ENCODE measurements at regions of chr3 and their contacts with region 1.

Region 1: GRCh38 chr3:141441381-141442364 is 45.2 kb upstream of the RASA2 start:
- DNase-seq: peak; percentile 57 to 82 (median 67)
- H3K4me3 ChIP-seq: no peak overlapping the region
- H3K4me3 Mint-ChIP-seq: peak overlapping the region in 6 of 7 donors; percentile 64 to 78 (median 72)
- H3K27ac ChIP-seq: no peak overlapping the region
- H3K27ac Mint-ChIP-seq: peak overlapping the region; percentile 35 to 89 (median 82)
- H3K4me1 ChIP-seq: peaks cover 26% of the 10 kb centered on the region
- H3K4me1 Mint-ChIP-seq: peaks cover 41 to 60% (median 55%) of the 10 kb centered on the region in 3 donors
- H3K27me3 ChIP-seq: no peaks in the 10 kb centered on the region
- H3K27me3 Mint-ChIP-seq: no peaks in the 10 kb centered on the region

Region 2: DNA sequence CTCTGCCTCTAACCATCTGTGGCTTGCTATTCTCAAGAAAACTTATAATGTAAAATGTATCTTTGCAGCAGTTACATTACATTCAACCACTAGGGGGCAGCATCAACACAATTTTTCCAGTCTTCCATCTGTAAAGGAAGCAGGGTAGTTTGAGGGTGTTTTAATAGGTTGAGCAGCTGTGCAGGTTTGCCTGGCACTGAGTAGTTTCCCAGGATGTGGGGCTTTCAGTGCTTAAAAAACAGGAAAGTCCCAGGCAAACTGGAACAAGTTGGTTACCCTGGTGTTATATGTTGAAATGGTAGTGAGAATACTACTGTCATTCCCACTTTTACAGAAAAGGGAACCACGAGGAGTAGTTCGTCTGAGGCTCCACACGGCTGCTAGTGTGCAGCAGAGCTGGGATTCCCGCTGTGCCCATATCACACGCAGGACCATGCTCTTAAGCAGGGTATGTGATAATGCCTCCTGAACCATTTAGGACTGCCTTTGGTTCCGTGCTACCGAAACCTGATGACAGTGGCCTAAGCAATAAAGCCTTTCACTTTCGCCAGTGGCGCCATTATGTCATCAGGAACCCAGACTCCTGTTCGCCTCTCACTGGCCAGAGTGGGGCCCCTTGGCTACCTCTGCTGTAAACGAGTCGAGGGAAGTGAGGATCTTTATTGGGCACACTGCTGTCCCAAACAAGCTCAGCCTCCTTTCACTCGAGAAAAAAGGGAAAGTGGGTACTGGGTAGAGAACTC is 138.0 kb before region 1 on chr3:
- CTCF ChIA-PET with region 1: interaction called, 19 read pairs
- POLR2A ChIA-PET with region 1: no interaction called
- DNase-seq: peak; percentile 38 to 70 (median 66)
- H3K4me3 ChIP-seq: no peak overlapping the region
- H3K4me3 Mint-ChIP-seq: peak overlapping the region in 1 of 7 donors; percentile 10
- H3K27ac ChIP-seq: no peak overlapping the region
- H3K27ac Mint-ChIP-seq: no peak overlapping the region
- H3K4me1 ChIP-seq: peaks cover 41% of the 10 kb centered on the region
- H3K4me1 Mint-ChIP-seq: peaks cover 24 to 36% (median 34%) of the 10 kb centered on the region in 3 donors
- H3K27me3 ChIP-seq: no peaks in the 10 kb centered on the region
- H3K27me3 Mint-ChIP-seq: no peaks in the 10 kb centered on the region

Region 3: GRCh38 chr3:141360888-141361598 is 80.6 kb before region 1 on chr3:
- CTCF ChIA-PET with region 1: interaction called, 62 read pairs
- POLR2A ChIA-PET with region 1: interaction called, 4 read pairs
- DNase-seq: peak in 2 of 5 donors; percentile 24 to 39
- H3K4me3 ChIP-seq: no peak overlapping the region
- H3K4me3 Mint-ChIP-seq: peak overlapping the region in 5 of 7 donors; percentile 30 to 73 (median 49)
- H3K27ac ChIP-seq: no peak overlapping the region
- H3K27ac Mint-ChIP-seq: peak overlapping the region in 1 of 8 donors; percentile 61
- H3K4me1 ChIP-seq: no peaks in the 10 kb centered on the region
- H3K4me1 Mint-ChIP-seq: peaks cover 1 to 10% (median 8%) of the 10 kb centered on the region in 3 donors
- H3K27me3 ChIP-seq: no peaks in the 10 kb centered on the region
- H3K27me3 Mint-ChIP-seq: peaks cover 0 to 3% of the 10 kb centered on the region in 2 donors

Region 4: DNA sequence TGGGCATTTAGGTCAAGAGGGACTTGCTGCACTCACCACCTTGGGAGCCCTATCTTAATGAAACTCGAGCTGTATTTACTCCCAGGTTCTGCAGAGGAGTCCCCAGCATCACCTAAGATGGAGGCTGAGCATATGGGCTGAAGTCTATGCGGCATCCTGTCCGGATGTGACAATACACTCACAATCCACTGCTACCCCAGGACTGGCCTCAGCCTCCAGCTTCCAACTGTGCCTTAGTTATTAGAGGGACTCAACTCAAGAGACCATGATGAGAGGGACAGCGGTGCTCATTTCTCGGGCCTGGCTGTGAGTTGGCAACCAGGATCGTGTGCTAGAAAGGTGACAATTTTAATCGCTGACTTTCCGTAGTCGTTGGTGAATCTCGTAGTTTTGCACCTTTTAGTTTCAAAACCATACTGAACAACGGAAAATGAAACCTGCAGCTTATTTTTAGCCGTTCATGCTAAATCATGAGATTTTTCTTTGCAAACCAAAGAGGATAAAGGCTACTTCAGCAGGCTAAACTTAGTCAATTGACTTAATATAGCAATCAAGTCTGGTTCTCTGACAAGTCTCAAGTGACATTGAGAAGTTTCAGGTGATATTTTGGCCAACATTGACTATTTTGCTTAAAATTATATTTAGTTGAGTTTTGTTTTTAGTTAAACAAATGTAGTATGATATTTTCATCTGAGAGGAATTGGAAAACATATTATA is 62.3 kb before region 1 on chr3:
- CTCF ChIA-PET with region 1: interaction called, 11 read pairs
- POLR2A ChIA-PET with region 1: interaction called, 3 read pairs
- DNase-seq: peak in 2 of 5 donors; percentile 41 to 68
- H3K4me3 ChIP-seq: no peak overlapping the region
- H3K4me3 Mint-ChIP-seq: peak overlapping the region; percentile 52 to 89 (median 80)
- H3K27ac ChIP-seq: peak overlapping the region; percentile 54
- H3K27ac Mint-ChIP-seq: peak overlapping the region; percentile 86 to 98 (median 96)
- H3K4me1 ChIP-seq: peaks cover 16% of the 10 kb centered on the region
- H3K4me1 Mint-ChIP-seq: peaks cover 33 to 48% (median 47%) of the 10 kb centered on the region in 3 donors
- H3K27me3 ChIP-seq: no peaks in the 10 kb centered on the region
- H3K27me3 Mint-ChIP-seq: no peaks in the 10 kb centered on the region

Region 5: DNA sequence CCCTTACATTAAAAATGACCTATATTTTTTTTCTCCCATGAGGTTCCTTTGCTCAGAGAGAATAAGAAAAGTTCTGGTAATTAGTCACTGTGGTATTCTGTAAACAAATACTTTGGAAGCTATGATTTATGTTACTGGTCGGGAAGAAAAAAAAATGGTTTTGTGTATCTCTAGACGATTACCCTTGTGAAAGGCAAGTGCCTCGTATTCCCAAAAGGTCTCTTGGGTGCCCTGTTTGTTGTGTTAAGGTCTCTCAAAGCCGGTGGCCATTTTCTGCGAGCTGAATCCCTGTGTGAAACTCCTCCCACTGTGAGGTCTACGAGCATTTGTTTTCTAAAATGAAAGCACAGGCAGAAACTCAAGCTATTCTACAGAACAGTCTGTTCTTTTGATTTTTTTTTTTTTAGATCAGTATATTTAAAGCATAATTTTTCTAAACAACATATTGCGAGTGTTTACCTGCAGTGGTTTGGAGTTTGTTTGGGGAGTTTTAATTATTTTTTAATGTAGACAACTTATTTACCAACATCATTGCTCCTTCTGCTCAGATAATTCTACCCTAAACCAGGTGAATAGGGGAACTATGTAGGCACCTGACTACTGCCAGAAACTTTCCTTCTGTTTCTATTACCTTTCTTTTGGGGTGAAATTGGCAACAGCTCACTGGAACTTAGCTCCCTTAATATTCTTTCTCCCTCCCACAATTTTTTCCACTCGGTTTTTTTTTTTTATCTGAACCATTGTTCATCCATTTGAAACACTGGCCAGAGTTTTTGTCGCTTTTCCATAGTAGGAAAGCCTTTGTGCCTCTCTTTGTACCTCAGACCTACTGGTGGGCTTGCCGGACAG is 29.4 kb before region 1 on chr3:
- CTCF ChIA-PET with region 1: interaction called, 18 read pairs
- POLR2A ChIA-PET with region 1: no interaction called
- DNase-seq: peak; percentile 35 to 71 (median 57)
- H3K4me3 ChIP-seq: peak overlapping the region; percentile 38
- H3K4me3 Mint-ChIP-seq: peak overlapping the region; percentile 62 to 90 (median 87)
- H3K27ac ChIP-seq: peak overlapping the region; percentile 34
- H3K27ac Mint-ChIP-seq: peak overlapping the region; percentile 97 to 100 (median 99)
- H3K4me1 ChIP-seq: peaks cover 77% of the 10 kb centered on the region
- H3K4me1 Mint-ChIP-seq: peaks cover 82 to 99% (median 98%) of the 10 kb centered on the region in 3 donors
- H3K27me3 ChIP-seq: no peaks in the 10 kb centered on the region
- H3K27me3 Mint-ChIP-seq: no peaks in the 10 kb centered on the region

Region 6: GRCh38 chr3:141452036-141452435 is 10.4 kb after region 1 on chr3:
- CTCF ChIA-PET with region 1: interaction called, 38 read pairs
- POLR2A ChIA-PET with region 1: interaction called, 6 read pairs
- DNase-seq: peak in 3 of 5 donors; percentile 34 to 57 (median 56)
- H3K4me3 ChIP-seq: no peak overlapping the region
- H3K4me3 Mint-ChIP-seq: no peak overlapping the region
- H3K27ac ChIP-seq: peak overlapping the region; percentile 13
- H3K27ac Mint-ChIP-seq: no peak overlapping the region
- H3K4me1 ChIP-seq: peaks cover 21% of the 10 kb centered on the region
- H3K4me1 Mint-ChIP-seq: peaks cover 10 to 16% (median 10%) of the 10 kb centered on the region in 3 donors
- H3K27me3 ChIP-seq: no peaks in the 10 kb centered on the region
- H3K27me3 Mint-ChIP-seq: no peaks in the 10 kb centered on the region